ENCODE measurements at regions of chr9 and their contacts with region 1.

Region 1: GRCh38 chr9:7234143-7234542 is 476.4 kb downstream of the KDM4C start:
- DNase-seq: peak; percentile 35
- H3K4me3 ChIP-seq: no peak overlapping the region
- H3K27ac ChIP-seq: no peak overlapping the region
- H3K4me1 ChIP-seq: no peaks in the 10 kb centered on the region
- H3K27me3 ChIP-seq: no peaks in the 10 kb centered on the region
- CTCF ChIP-seq: peak; percentile 40 to 43

Region 2: GRCh38 chr9:7094052-7094451 is 140.1 kb before region 1 on chr9:
- CTCF ChIA-PET with region 1: no interaction called
- dilution Hi-C with region 1: no loop called
- in situ Hi-C with region 1: no loop called
- intact Hi-C with region 1: loop called (anchors 10 kb)
- DNase-seq: peak; percentile 12
- H3K4me3 ChIP-seq: no peak overlapping the region
- H3K27ac ChIP-seq: no peak overlapping the region
- H3K4me1 ChIP-seq: no peaks in the 10 kb centered on the region
- H3K27me3 ChIP-seq: no peaks in the 10 kb centered on the region
- CTCF ChIP-seq: peak; percentile 43 to 52

Region 3: DNA sequence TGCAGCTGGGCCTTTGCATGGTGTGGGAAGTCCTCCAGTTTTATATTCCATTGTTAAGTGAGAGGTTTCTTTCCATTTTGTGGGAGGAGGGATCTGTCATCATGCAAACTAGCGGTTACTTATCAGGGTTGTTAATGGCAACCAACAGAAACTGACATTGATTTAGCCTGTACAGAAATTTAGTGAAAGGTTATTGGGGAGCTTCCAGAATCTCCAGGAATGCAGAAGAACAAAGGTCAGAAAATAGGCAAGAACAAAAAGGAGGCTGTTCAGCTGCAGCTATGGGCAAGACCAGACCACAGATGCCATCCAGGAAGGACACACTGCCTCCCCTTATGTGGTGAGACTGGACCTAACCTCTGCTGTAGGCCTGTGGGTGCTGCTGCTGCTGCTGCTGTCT is 80.6 kb before region 1 on chr9:
- CTCF ChIA-PET with region 1: interaction called, 10 read pairs
- dilution Hi-C with region 1: no loop called
- in situ Hi-C with region 1: no loop called
- intact Hi-C with region 1: no loop called
- DNase-seq: no peak
- H3K4me3 ChIP-seq: no peak overlapping the region
- H3K27ac ChIP-seq: no peak overlapping the region
- H3K4me1 ChIP-seq: no peaks in the 10 kb centered on the region
- H3K27me3 ChIP-seq: no peaks in the 10 kb centered on the region
- CTCF ChIP-seq: no peak

Region 4: DNA sequence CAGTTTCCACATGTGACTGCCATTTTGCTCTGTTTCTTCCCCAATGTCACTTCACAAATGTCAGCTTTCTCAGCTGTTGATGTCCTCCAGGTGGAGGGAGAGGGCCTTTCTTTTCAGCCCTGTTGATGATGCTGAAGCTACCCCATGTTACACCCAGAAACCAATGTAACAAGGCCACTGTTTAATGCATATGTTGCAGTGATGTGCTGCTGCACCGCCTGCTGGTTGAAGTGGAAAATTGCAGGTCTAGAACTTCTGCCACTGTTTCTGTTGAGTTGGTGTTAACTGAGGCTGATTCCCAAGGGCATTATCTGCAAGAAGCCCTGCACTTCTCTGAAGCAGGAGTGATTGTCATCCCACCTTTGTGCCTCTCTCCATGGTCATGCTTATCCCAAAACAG is 48.0 kb before region 1 on chr9:
- CTCF ChIA-PET with region 1: no interaction called
- dilution Hi-C with region 1: no loop called
- in situ Hi-C with region 1: no loop called
- intact Hi-C with region 1: no loop called
- DNase-seq: peak; percentile 21
- H3K4me3 ChIP-seq: no peak overlapping the region
- H3K27ac ChIP-seq: no peak overlapping the region
- H3K4me1 ChIP-seq: peaks cover 13% of the 10 kb centered on the region
- H3K27me3 ChIP-seq: no peaks in the 10 kb centered on the region
- CTCF ChIP-seq: peak; percentile 59 to 70

Region 5: DNA sequence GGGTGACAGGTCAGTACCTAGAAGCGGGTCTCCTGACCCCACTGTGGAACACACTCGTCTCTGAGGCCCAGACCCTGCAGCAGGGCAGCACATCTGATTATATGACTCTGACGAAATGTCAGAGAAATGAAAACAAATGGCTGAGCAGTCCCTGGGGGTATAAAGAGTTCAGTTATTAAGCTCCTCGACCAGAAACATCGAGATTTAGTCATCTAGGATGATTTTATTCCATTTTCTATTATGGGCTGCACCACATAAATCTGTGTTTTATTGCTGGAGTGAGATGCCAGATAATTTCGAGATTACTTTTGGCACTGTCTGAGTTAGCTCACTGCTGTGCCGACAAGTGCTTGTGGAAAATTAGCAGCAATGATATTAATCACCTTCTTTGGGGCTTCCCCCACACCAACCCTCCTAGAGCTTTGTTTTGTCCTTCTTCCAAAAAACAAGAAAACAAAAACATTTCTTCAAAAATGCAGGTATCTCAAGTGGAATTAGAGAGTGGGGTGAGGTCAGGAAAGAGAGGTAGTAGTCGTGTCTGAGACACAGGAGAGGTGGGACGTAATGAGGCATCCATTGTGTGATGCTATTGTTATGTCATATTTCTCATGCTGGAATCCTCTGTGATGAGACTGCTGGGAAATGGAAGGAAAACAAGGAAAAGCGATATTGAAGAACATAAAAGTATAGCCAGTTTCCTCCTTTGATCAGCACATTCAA is 69.9 kb after region 1 on chr9:
- CTCF ChIA-PET with region 1: no interaction called
- dilution Hi-C with region 1: no loop called
- in situ Hi-C with region 1: no loop called
- intact Hi-C with region 1: no loop called
- DNase-seq: no peak
- H3K4me3 ChIP-seq: no peak overlapping the region
- H3K27ac ChIP-seq: no peak overlapping the region
- H3K4me1 ChIP-seq: no peaks in the 10 kb centered on the region
- H3K27me3 ChIP-seq: peaks cover 5% of the 10 kb centered on the region
- CTCF ChIP-seq: no peak

Measured in mammary epithelial cell (primary cell).